ENCODE measurements at regions of chr19 and their contacts with region 1.

Region 1: GRCh38 chr19:47819858-47820257 is 1.9 kb upstream of the CRX start:
- DNase-seq: peak in 1 of 2 experiments; percentile 17
- H3K4me3 ChIP-seq: peak overlapping the region in 2 of 4 experiments; percentile 14 to 17; a peak in 1 of 8 replicates
- H3K27ac ChIP-seq: no peak overlapping the region
- H3K4me1 ChIP-seq: peaks cover 0 to 19% (median 11%) of the 10 kb centered on the region in 4 experiments; a peak in 6 of 7 replicates
- H3K27me3 ChIP-seq: no peaks in the 10 kb centered on the region
- CTCF ChIP-seq: no peak
- EP300 ChIP-seq: 0 out of 3 replicates have a peak, but pooled peaks of 1 of the 2 experiments have one; percentile 33
- POLR2A ChIP-seq: no peak
- RAD21 ChIP-seq: no peak

Region 2: DNA sequence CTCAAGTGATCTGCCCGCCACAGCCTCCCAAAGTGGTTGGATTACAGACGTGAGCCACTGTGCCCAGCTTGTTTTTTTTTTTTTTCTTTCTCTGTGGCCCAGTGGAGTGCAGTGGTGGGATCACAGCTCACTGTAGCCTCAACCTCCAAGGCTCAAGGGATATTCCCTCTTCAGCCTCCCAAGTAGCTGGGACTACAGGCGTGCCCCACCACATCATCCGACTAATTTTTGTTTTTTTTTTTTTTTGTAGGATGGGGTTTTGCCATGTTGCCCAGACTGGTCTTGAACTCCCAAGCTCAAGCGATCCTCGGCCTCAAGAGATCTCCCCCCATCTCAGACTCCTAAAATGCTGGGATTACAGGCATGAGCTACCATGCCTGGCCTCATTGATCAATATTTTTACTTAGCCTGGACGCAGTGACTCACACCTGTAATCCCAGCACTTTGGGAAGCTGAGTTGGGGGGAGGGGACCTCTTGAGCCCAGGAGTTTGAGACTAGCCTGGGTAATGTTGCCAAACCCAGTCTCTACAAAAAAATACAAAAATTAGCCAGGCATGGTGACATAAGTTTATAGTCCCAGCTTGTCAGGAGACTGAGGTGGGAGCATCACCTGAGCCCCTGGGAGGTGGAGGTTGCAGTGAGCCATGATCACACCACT is 687.5 kb before region 1 on chr19:
- CTCF ChIA-PET with region 1: no interaction called
- POLR2A ChIA-PET with region 1: no interaction called
- DNase-seq: no peak
- H3K4me3 ChIP-seq: peak overlapping the region; percentile 90 to 99 (median 94)
- H3K27ac ChIP-seq: no peak overlapping the region
- H3K4me1 ChIP-seq: peaks cover 0 to 8% (median 7%) of the 10 kb centered on the region in 4 experiments; a peak in 5 of 7 replicates
- H3K27me3 ChIP-seq: no peaks in the 10 kb centered on the region
- CTCF ChIP-seq: no peak
- EP300 ChIP-seq: no peak
- POLR2A ChIP-seq: no peak
- RAD21 ChIP-seq: no peak

Region 3: GRCh38 chr19:47756953-47757608 is 62.8 kb before region 1 on chr19:
- CTCF ChIA-PET with region 1: no interaction called
- POLR2A ChIA-PET with region 1: no interaction called
- DNase-seq: no peak
- H3K4me3 ChIP-seq: no peak overlapping the region
- H3K27ac ChIP-seq: no peak overlapping the region
- H3K4me1 ChIP-seq: no peaks in the 10 kb centered on the region
- H3K27me3 ChIP-seq: no peaks in the 10 kb centered on the region
- CTCF ChIP-seq: no peak
- EP300 ChIP-seq: no peak
- POLR2A ChIP-seq: peak in 1 of 2 experiments; percentile 37; a peak in 2 of 3 replicates
- RAD21 ChIP-seq: no peak

Region 4: GRCh38 chr19:47848823-47849473 is 29.1 kb after region 1 on chr19:
- CTCF ChIA-PET with region 1: interaction called, 22 read pairs
- POLR2A ChIA-PET with region 1: interaction called, 11 read pairs
- DNase-seq: peak; percentile 62 to 91
- H3K4me3 ChIP-seq: peak overlapping the region; percentile 26 to 52 (median 34); a peak in 7 of 8 replicates
- H3K27ac ChIP-seq: peak overlapping the region; percentile 83
- H3K4me1 ChIP-seq: peaks cover 5 to 12% (median 6%) of the 10 kb centered on the region in 4 experiments; a peak in 5 of 7 replicates
- H3K27me3 ChIP-seq: no peaks in the 10 kb centered on the region
- CTCF ChIP-seq: peak; percentile 60 to 63 (median 61); a peak in 3 of 4 replicates
- EP300 ChIP-seq: no peak
- POLR2A ChIP-seq: peak in 1 of 2 experiments; percentile 17; a peak in 1 of 3 replicates
- RAD21 ChIP-seq: peak in 1 of 2 experiments; percentile 42; a peak in 3 of 4 replicates

Measured in H1 (cell line).